ENCODE measurements at regions of chr2 and their contacts with region 1.

Region 1: DNA sequence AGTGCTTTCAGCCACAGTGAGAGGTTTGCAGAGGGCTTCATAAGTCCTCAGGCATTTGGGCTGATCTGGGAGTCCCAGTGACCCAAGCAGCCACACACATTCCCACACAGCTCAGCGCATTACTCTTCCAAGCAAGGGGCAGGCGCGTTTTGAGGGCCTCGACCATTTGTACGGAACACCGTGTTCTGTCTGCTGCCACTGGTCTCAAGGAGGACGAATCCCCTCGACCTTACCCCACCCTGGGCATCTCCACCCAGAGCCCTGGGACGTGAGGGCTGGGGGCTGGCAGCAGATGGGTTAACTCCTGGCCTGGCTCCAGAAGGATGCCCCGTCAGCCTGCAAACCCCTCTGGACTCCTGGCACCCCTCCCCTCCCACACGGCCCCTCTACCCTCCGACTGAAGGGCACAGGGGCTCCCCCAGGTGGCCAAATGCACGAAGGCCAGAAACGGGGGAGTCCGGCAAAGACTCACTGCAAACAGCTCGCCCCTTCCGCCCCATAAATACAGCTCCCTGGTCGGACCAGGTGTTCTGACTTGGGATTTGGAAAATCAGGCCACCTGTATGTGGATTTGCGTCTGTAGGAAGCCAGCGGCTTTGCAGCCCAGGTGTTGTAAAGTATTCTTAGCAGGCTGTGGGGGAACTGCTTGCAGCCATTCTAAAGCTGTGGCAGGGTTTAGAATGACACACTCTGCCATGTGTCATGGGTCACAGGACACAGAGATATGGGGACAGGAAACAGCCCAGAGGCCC is 33.6 kb upstream of the PTMA start:
- DNase-seq: peak; percentile 67
- H3K4me3 Mint-ChIP-seq: no peak overlapping the region
- H3K27ac Mint-ChIP-seq: no peak overlapping the region
- H3K4me1 Mint-ChIP-seq: peaks cover 19% of the 10 kb centered on the region
- H3K27me3 Mint-ChIP-seq: no peaks in the 10 kb centered on the region
- CTCF ChIP-seq: peak; percentile 83

Region 2: GRCh38 chr2:231563378-231563961 is 111.3 kb before region 1 on chr2:
- CTCF ChIA-PET with region 1: interaction called, 16 read pairs
- POLR2A ChIA-PET with region 1: no interaction called
- intact Hi-C with region 1: loop called (anchors 2 kb)
- DNase-seq: peak; percentile 70
- H3K4me3 Mint-ChIP-seq: no peak overlapping the region
- H3K27ac Mint-ChIP-seq: no peak overlapping the region
- H3K4me1 Mint-ChIP-seq: no peaks in the 10 kb centered on the region
- H3K27me3 Mint-ChIP-seq: no peaks in the 10 kb centered on the region
- CTCF ChIP-seq: peak; percentile 78

Region 3: GRCh38 chr2:231621129-231621879 is 53.5 kb before region 1 on chr2:
- CTCF ChIA-PET with region 1: interaction called, 12 read pairs
- POLR2A ChIA-PET with region 1: interaction called, 5 read pairs
- intact Hi-C with region 1: no loop called
- DNase-seq: no peak
- H3K4me3 Mint-ChIP-seq: no peak overlapping the region
- H3K27ac Mint-ChIP-seq: no peak overlapping the region
- H3K4me1 Mint-ChIP-seq: peaks cover 25% of the 10 kb centered on the region
- H3K27me3 Mint-ChIP-seq: no peaks in the 10 kb centered on the region
- CTCF ChIP-seq: no peak

Region 4: GRCh38 chr2:231655897-231656296 is 18.9 kb before region 1 on chr2:
- CTCF ChIA-PET with region 1: interaction called, 123 read pairs
- POLR2A ChIA-PET with region 1: interaction called, 6 read pairs
- intact Hi-C with region 1: no loop called
- DNase-seq: no peak
- H3K4me3 Mint-ChIP-seq: no peak overlapping the region
- H3K27ac Mint-ChIP-seq: no peak overlapping the region
- H3K4me1 Mint-ChIP-seq: no peaks in the 10 kb centered on the region
- H3K27me3 Mint-ChIP-seq: no peaks in the 10 kb centered on the region
- CTCF ChIP-seq: no peak

Region 5: DNA sequence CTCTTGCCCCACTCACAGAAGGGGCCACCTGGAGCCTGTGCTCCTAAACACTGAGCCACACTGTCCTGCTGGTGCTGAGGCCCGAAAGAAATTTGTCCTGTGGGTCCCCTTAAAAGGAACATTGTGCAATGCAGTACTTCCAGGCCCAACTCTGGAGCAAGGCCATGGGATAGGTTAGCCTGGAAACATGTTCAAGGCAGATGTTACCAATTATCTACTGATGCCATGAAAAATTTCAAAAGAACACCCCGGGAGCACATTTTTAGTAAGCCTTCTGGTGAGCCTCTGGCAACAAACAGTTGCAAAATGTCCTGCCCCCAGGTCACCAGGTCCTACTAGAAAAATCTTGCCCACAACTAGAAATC is 21.2 kb after region 1 on chr2:
- CTCF ChIA-PET with region 1: interaction called, 142 read pairs
- POLR2A ChIA-PET with region 1: interaction called, 7 read pairs
- intact Hi-C with region 1: no loop called
- DNase-seq: peak; percentile 41
- H3K4me3 Mint-ChIP-seq: no peak overlapping the region
- H3K27ac Mint-ChIP-seq: no peak overlapping the region
- H3K4me1 Mint-ChIP-seq: no peaks in the 10 kb centered on the region
- H3K27me3 Mint-ChIP-seq: no peaks in the 10 kb centered on the region
- CTCF ChIP-seq: no peak

Region 6: GRCh38 chr2:231713730-231714430 is 39.1 kb after region 1 on chr2:
- CTCF ChIA-PET with region 1: interaction called, 352 read pairs
- POLR2A ChIA-PET with region 1: interaction called, 28 read pairs
- intact Hi-C with region 1: loop called (anchors 1 kb)
- DNase-seq: peak; percentile 94
- H3K4me3 Mint-ChIP-seq: no peak overlapping the region
- H3K27ac Mint-ChIP-seq: peak overlapping the region; percentile 49
- H3K4me1 Mint-ChIP-seq: peaks cover 31% of the 10 kb centered on the region
- H3K27me3 Mint-ChIP-seq: no peaks in the 10 kb centered on the region
- CTCF ChIP-seq: peak; percentile 91

Measured in MCF 10A (cell line).